Left ventricle myocardium inferior (tissue), 1 donor: ENCODE measurements at regions of chr17 and their contacts with region 1.

Region 1: GRCh38 chr17:81294856-81295680 is at the start of gene SLC38A10:
- DNase-seq: peak; percentile 92
- H3K4me3 ChIP-seq: peak within 1 kb of the TSS; percentile 89
- H3K27ac ChIP-seq: peak within 1 kb of the TSS; percentile 96
- H3K4me1 ChIP-seq: peaks cover 51% of the 10 kb centered on the region
- H3K27me3 ChIP-seq: no peaks in the 10 kb centered on the region
- CTCF ChIP-seq: no peak
- total RNA-seq, gene SLC38A10: 50.1 TPM

Region 2: DNA sequence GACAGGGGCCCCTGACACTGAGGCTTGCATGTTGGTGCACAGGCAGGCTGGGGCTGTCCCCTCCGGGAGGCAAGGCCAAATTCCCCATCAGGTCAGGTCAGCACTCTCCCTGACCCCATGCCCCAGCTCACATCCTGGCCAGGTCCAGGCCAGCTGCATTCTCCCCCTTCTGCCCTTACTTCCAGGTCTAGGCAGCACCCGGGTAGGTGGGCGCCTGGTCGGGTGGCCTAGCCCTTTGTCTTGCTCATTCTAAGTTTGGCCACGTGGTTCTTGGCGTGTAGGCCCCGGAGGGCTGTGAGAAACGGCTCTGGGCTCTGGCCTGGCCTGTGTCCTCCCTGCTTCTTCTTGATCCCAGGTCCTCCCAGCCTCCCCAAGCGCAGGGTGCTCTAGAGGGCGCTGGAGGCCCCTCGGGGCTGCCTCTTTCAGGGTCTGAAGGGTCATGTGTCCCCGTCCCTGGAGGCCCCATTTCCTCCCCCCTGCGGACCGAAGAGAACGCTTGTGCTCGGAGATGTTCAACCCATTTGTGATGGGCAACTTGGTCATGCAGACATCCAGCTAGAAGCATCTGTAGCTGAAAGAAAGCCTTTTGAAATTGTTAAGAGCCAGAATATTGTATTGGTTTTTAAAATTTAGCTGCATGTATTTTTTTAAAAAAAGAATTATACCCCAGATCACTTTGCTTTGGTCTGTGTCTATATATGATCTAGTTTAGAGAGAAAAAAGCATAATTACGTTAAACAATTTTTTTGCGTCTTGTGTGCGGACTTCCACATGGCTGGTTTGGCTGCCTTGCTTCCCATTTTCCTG is 106.9 kb after region 1 on chr17:
- intact Hi-C with region 1: loop called (anchors 10 kb)
- DNase-seq: peak; percentile 61
- H3K4me3 ChIP-seq: peak overlapping the region; percentile 96
- H3K27ac ChIP-seq: peak overlapping the region; percentile 100
- H3K4me1 ChIP-seq: peaks cover 92% of the 10 kb centered on the region
- H3K27me3 ChIP-seq: no peaks in the 10 kb centered on the region
- CTCF ChIP-seq: peak; percentile 33